Activated naive CD4-positive, alpha-beta T cell treated with anti-CD3 and anti-CD28 coated beads for 36 hours (primary cell): ENCODE measurements at regions of chr4 and their contacts with region 1.

Region 1: GRCh38 chr4:6250235-6250983 is 19.2 kb upstream of the WFS1 start:
- DNase-seq: no peak
- H3K4me3 Mint-ChIP-seq: no peak overlapping the region
- H3K27ac Mint-ChIP-seq: no peak overlapping the region
- H3K4me1 Mint-ChIP-seq: no peaks in the 10 kb centered on the region
- H3K27me3 Mint-ChIP-seq: peaks cover 24% of the 10 kb centered on the region

Region 2: DNA sequence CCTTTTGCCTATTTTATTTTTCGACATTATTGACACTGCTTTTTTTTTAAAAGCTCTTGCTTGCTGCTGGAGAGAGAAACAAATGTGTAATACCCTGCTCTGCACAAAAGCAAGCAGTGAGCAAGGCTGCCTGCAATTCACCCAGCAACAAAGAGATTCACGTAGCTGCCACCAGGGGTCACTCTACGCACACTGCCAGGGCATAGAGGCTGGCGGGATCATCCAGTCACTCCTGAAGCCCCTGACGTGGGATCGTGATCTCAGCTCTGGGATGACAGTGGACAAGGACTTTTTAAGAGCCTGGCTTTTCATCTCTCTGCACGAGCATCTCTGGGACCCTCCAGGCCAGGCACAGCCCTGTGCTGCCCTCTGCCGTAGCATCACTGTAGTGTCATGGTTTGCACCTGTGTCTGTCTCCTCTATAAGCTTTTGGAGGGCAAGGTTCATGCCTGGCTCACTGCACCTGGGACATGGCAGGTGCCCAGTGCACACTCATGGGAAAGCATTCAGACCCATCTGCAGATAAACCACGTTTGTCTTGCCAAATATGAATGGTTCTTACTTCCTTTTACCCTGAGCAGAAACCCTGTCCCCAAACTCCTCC is 252.0 kb before region 1 on chr4:
- CTCF ChIA-PET with region 1: interaction called, 8 read pairs
- intact Hi-C with region 1: loop called (anchors 1 kb)
- DNase-seq: peak; percentile 55
- H3K4me3 Mint-ChIP-seq: no peak overlapping the region
- H3K27ac Mint-ChIP-seq: no peak overlapping the region
- H3K4me1 Mint-ChIP-seq: no peaks in the 10 kb centered on the region
- H3K27me3 Mint-ChIP-seq: peaks cover 7% of the 10 kb centered on the region

Region 3: DNA sequence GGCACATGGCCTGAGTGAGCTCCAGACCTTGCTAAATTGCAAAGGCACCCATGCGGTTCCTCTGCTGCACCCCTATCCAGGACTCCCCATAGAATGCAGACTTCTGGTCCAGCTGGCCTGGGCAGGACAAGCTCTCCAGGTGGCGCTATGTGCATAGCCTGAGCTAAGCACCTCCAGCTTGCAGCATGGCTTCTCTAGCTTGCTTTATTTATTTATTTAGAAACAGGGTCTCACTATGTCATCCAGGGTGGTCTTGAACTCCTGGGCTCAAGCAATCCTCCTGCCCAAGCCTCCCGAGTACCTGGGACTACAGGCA is 13.8 kb after region 1 on chr4:
- CTCF ChIA-PET with region 1: interaction called, 26 read pairs
- intact Hi-C with region 1: no loop called
- DNase-seq: peak; percentile 60
- H3K4me3 Mint-ChIP-seq: no peak overlapping the region
- H3K27ac Mint-ChIP-seq: no peak overlapping the region
- H3K4me1 Mint-ChIP-seq: peaks cover 9% of the 10 kb centered on the region
- H3K27me3 Mint-ChIP-seq: peaks cover 5% of the 10 kb centered on the region

Region 4: DNA sequence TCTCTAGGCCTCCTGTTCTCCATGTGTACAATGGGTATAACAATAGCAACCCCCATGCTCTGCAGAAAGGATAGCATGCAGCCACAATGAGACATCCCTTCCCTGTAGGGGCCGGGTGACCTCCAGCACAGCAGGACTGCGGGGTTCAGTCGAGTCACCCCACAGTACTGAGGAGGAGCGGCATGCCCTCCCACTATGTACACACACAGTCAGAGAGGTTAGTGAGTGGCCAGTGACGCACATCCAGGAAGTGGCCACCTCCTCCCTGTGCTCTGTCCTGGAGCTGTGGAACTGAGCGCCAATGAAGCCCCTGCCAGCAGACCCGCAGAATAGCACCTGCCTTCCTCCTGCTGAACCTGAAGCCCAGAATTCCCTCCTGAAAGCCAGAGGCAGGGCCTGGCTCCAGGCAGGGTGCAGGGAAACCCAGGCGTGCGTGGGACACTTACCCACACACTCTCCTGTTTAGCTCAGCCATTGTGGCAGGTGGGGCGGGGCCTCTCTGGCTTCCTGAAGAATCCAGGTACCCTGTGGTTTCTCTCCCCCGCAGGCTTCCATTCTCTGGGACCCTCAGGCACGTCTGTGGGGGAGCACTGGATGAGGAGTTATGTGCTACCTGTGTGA is 69.2 kb after region 1 on chr4:
- CTCF ChIA-PET with region 1: interaction called, 39 read pairs
- intact Hi-C with region 1: no loop called
- DNase-seq: no peak
- H3K4me3 Mint-ChIP-seq: no peak overlapping the region
- H3K27ac Mint-ChIP-seq: no peak overlapping the region
- H3K4me1 Mint-ChIP-seq: no peaks in the 10 kb centered on the region
- H3K27me3 Mint-ChIP-seq: peaks cover 10% of the 10 kb centered on the region

Region 5: DNA sequence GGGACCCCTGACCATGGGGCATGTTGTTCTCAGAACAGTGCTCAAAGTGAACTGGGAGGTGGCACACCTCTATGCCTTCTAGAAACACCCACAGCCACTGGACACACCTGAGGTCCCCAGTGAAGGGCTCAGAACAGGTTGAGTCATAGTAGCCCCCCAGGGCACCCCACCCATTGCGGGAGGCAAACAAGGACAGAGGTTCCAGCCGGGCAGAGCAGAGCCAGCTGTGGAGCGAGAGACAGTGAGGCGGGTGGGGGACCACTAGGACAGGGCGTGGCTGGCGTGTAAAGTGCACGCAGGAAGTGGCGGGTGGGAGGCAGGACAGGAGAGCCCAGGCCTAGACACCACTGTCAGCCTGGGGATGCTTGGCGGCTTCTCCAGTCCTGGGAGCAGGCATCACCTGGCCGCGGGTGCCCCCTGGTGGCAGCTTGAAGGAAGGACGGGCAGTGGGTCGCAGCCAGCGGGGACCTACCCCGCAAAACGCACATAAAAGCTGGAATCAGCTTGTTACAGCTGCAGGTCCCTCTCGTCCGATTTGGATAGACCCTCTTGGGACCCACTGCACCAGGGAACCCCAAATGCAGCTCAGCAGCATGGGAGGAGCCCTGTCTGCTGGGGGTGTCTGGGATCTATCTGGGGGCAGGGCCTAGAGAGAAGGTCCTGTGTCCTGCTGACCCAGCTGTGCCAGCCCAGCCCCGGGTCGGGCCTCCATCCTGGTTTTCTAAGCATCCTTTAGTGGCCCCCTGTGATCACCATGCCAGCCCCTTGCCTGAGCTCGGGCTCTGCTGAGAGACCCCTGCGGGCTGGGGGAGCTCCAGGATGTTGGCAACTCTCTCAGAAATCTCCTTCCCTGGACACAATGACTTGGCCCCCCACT is 76.9 kb after region 1 on chr4:
- CTCF ChIA-PET with region 1: interaction called, 105 read pairs
- intact Hi-C with region 1: loop called (anchors 1 kb)
- DNase-seq: peak; percentile 84
- H3K4me3 Mint-ChIP-seq: no peak overlapping the region
- H3K27ac Mint-ChIP-seq: no peak overlapping the region
- H3K4me1 Mint-ChIP-seq: no peaks in the 10 kb centered on the region
- H3K27me3 Mint-ChIP-seq: peaks cover 31% of the 10 kb centered on the region

Region 6: DNA sequence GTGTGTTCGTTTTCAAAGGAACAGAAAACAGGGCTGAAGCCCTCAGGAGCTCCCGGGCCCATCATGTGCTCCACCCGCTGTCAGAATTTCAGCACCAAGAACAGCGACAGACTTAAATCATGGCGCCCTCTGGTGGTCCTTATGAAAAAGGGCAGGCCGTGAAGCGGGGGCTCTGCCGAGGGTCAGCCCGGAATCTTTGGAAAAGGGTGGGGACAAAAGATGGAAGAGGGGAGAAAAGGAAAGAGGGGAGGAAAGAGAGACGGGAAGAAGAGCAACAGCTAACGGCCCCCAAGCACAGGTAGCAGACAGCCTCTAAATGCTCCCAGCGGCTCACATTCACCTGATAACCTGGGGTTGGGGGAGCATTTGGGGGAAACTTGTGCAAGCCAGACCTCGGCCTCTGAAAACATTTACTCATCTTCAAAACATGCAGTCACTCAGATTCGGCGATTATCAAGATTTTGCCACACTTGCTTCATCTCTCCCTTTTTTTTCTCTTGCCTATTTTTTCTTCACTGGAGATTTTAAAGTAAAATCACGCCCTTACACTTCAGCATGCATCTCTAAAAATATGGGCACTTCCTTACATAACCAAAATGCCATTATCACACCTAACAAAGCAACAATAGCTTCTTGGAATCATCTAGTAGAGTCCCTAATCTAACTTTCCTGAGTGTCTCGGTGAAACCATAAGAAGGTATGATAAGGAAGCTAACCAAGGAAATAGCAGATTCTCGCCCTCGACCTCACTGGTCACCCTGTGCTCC is 296.5 kb after region 1 on chr4:
- CTCF ChIA-PET with region 1: interaction called, 14 read pairs
- intact Hi-C with region 1: loop called (anchors 2 kb)
- DNase-seq: peak; percentile 61
- H3K4me3 Mint-ChIP-seq: no peak overlapping the region
- H3K27ac Mint-ChIP-seq: no peak overlapping the region
- H3K4me1 Mint-ChIP-seq: no peaks in the 10 kb centered on the region
- H3K27me3 Mint-ChIP-seq: peaks cover 28% of the 10 kb centered on the region